ENCODE measurements at regions of chr9 and their contacts with region 1.

Region 1: DNA sequence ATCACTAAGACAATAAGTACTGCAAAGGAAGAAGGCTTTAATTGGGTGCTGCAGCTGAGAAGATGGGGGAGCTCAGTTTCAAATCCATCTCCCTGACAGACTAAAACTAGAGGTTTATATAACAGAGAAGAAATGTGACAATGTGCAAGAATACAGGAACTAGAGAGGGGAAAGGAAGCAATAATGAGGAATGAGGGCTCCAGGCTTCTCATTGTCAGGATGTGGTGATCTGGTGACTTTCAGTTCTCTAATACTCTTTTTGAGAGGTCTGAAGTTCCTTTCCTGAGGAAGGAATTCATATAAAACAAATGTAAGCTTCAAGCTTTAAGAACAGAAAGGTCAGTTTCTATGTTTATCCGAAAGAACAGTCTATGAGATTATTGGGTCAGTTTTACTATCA is 42.5 kb upstream of the SPATA31E1 start:
- DNase-seq: no peak
- ATAC-seq: peak in 1 of 2 donors; percentile 26

Region 2: GRCh38 chr9:87233899-87234455 is 606.2 kb before region 1 on chr9:
- intact Hi-C with region 1: loop called in 1 of 2 experiments (anchors 5 kb)
- DNase-seq: no peak
- ATAC-seq: peak in 1 of 2 donors; percentile 23